ENCODE measurements at regions of chr17 and their contacts with region 1.

Region 1: GRCh38 chr17:28346746-28347246 is 10.5 kb downstream of the POLDIP2 start:
- DNase-seq: no peak
- ATAC-seq: no peak
- H3K4me3 ChIP-seq: no peak overlapping the region
- H3K4me3 Mint-ChIP-seq: no peak overlapping the region
- H3K27ac ChIP-seq: no peak overlapping the region
- H3K27ac Mint-ChIP-seq: no peak overlapping the region
- H3K4me1 ChIP-seq: no peaks in the 10 kb centered on the region
- H3K4me1 Mint-ChIP-seq: no peaks in the 10 kb centered on the region
- H3K27me3 ChIP-seq: no peaks in the 10 kb centered on the region
- H3K27me3 Mint-ChIP-seq: no peaks in the 10 kb centered on the region

Region 2: DNA sequence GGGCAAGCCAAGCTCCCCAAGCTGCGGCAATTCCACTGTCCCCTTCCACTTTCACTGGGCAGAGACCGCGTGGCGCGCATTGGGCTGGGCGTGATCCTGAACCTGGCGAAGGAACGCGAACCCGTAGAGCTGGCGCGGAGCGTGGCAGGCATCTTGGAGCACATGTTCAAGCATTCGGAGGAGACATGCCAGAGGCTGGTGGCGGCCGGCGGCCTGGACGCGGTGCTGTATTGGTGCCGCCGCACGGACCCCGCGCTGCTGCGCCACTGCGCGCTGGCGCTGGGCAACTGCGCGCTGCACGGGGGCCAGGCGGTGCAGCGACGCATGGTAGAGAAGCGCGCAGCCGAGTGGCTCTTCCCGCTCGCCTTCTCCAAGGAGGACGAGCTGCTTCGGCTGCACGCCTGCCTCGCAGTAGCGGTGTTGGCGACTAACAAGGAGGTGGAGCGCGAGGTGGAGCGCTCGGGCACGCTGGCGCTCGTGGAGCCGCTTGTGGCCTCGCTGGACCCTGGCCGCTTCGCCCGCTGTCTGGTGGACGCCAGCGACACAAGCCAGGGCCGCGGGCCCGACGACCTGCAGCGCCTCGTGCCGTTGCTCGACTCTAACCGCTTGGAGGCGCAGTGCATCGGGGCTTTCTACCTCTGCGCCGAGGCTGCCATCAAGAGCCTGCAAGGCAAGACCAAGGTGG is 34.5 kb after region 1 on chr17:
- CTCF ChIA-PET with region 1: no interaction called
- POLR2A ChIA-PET with region 1: no interaction called
- DNase-seq: peak in 3 of 35 experiments; percentile 6 to 27 (median 23)
- ATAC-seq: no peak
- H3K4me3 ChIP-seq: no peak overlapping the region
- H3K4me3 Mint-ChIP-seq: peak overlapping the region; percentile 14 to 51 (median 28)
- H3K27ac ChIP-seq: no peak overlapping the region
- H3K27ac Mint-ChIP-seq: no peak overlapping the region
- H3K4me1 ChIP-seq: peaks cover 2 to 29% of the 10 kb centered on the region in 2 experiments
- H3K4me1 Mint-ChIP-seq: peaks cover 29 to 42% (median 38%) of the 10 kb centered on the region in 3 donors
- H3K27me3 ChIP-seq: peaks cover 10 to 11% of the 10 kb centered on the region in 2 experiments
- H3K27me3 Mint-ChIP-seq: peaks cover 4 to 6% of the 10 kb centered on the region in 2 donors

Region 3: DNA sequence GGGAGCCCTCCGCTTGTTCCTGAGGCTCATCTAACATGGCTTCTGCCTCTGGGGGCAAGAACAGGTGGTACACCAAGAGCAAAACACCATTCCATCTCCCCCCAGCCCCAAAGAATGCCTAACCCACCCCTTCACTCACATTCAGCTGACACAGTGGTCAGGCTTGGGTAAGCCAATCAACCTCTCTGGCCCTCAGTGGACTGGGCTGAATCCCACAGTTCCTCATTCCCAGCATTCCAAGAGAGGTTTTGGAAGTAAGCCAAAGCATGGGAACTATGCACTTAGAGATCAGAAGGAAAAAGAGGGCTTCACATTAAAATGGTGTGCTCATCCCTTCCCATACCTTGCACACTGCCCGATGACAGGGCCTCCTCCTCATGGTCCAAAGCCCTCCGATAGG is 216.7 kb after region 1 on chr17:
- CTCF ChIA-PET with region 1: no interaction called
- POLR2A ChIA-PET with region 1: interaction called in 1 of 2 experiments, 14 read pairs
- DNase-seq: no peak
- ATAC-seq: no peak
- H3K4me3 ChIP-seq: no peak overlapping the region
- H3K4me3 Mint-ChIP-seq: no peak overlapping the region
- H3K27ac ChIP-seq: no peak overlapping the region
- H3K27ac Mint-ChIP-seq: no peak overlapping the region
- H3K4me1 ChIP-seq: peaks cover 0 to 3% of the 10 kb centered on the region in 2 experiments
- H3K4me1 Mint-ChIP-seq: peaks cover 22 to 24% (median 23%) of the 10 kb centered on the region in 3 donors
- H3K27me3 ChIP-seq: no peaks in the 10 kb centered on the region
- H3K27me3 Mint-ChIP-seq: no peaks in the 10 kb centered on the region

Measured in T-cell (primary cell).